Endothelial cell of umbilical vein (primary cell): ENCODE measurements at regions of chr4 and their contacts with region 1.

Region 1: DNA sequence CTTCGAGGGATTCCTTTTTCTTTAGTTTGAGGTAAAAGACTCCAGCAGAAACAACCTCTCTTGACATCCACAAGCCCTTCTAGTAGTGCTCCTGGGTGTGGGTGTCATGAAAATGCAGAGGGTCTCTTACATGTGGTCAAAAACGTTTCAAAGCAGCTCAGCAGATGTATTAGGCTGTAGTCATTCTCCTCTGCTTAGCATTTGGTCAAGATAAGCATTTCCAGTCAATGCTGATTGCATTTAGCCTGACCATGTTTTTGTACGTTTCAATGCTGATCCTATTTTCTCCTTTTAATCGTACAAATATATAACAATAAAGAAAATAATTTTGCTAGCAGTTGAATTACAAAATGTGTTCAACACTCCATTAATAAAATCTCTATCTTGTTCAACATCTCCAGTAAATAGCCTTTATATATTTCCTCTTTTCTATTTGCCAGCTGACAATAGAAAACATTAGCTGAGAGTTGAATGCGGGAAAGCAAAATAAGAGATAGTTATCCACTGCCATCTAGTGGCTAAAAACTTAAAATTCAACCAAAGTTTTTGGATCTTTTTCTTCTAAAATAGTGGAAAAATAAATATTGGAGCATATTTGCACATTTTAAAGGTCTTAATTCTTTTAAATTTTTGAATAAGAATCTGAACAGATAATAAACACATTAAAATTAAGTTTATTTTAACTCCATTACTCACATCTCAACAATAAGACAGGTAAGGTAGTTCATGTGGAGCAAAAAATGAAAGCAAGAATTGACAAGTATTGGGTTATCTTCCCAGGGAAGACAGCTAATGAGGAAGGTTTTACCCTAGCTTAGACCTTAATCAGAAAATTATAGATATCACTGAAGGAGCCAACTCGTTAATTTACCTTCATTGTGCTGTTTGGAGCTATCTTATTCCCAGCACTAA is 15.2 kb upstream of the PACRGL start:
- DNase-seq: peak; percentile 40
- H3K4me3 ChIP-seq: no peak overlapping the region
- H3K27ac ChIP-seq: no peak overlapping the region
- H3K4me1 ChIP-seq: no peaks in the 10 kb centered on the region
- H3K27me3 ChIP-seq: peaks cover 4 to 11% of the 10 kb centered on the region in 2 experiments
- CTCF ChIP-seq: peak; percentile 20 to 22
- POLR2A ChIP-seq: no peak

Region 2: DNA sequence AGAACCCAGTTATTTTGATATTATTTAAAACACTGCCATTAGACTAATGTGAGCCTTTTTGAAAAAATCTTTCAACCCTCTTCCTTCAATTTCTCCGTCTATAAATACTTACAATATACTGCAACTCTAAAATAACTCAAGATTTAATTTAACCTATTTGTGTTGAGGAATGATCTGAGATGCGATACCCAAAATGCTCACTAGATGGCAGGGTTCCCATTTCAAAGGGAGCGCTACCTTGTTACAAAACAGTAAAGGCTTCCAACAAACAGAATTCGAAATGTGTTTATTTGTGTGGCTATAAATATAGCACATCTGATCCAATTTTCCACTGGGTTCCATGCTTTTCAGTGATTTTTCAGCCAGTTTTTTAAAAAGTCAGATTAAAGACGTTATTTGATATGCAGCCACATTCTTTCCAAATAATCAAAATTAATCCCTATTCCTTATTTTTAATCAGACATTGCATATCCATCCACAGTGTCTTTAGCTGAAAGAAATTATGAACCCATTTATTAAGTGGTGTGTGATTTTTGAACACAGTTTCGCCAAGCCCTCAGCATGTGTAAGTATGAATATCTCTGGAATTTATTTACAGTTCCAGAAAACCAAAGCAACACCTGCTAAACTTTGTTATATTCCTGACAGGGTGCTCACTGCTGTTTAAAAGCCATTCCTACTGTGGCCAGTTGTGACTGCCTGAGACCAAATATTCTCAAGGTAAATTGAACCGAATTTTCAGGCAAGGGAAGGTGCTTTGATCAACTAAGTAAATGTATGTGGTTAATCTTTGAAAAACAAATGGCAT is 1995.6 kb before region 1 on chr4:
- CTCF ChIA-PET with region 1: interaction called, 4 read pairs
- POLR2A ChIA-PET with region 1: no interaction called
- dilution Hi-C with region 1: no loop called
- intact Hi-C with region 1: loop called (anchors 1 kb)
- DNase-seq: peak; percentile 77
- H3K4me3 ChIP-seq: no peak overlapping the region
- H3K27ac ChIP-seq: no peak overlapping the region
- H3K4me1 ChIP-seq: peaks cover 2% of the 10 kb centered on the region
- H3K27me3 ChIP-seq: no peaks in the 10 kb centered on the region
- CTCF ChIP-seq: peak; percentile 57 to 68
- POLR2A ChIP-seq: no peak

Region 3: GRCh38 chr4:20305976-20306375 is 379.1 kb before region 1 on chr4:
- CTCF ChIA-PET with region 1: interaction called, 12 read pairs
- POLR2A ChIA-PET with region 1: no interaction called
- dilution Hi-C with region 1: no loop called
- intact Hi-C with region 1: no loop called
- DNase-seq: no peak
- H3K4me3 ChIP-seq: no peak overlapping the region
- H3K27ac ChIP-seq: no peak overlapping the region
- H3K4me1 ChIP-seq: no peaks in the 10 kb centered on the region
- H3K27me3 ChIP-seq: no peaks in the 10 kb centered on the region
- CTCF ChIP-seq: peak in 1 of 2 donors; percentile 12
- POLR2A ChIP-seq: no peak

Region 4: DNA sequence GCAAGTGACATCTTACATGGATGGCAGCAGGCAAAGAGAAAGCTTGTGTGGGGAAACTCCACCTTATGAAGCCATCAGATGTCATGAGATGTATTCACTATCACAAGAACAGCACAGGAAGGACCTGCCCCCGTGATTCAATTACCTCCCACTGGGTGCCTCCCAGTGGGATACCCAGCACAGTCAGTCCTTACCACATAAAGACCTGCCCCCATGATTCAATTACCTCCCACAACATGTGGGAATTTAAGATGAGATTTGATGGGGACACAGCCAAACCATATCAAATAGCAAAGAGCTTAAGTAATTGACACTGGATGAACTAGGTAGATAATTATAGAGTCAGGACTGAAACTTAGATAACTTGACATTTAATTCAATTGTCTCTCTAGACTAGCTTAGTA is 347.8 kb before region 1 on chr4:
- CTCF ChIA-PET with region 1: no interaction called
- POLR2A ChIA-PET with region 1: no interaction called
- dilution Hi-C with region 1: no loop called
- intact Hi-C with region 1: no loop called
- DNase-seq: no peak
- H3K4me3 ChIP-seq: no peak overlapping the region
- H3K27ac ChIP-seq: no peak overlapping the region
- H3K4me1 ChIP-seq: no peaks in the 10 kb centered on the region
- H3K27me3 ChIP-seq: no peaks in the 10 kb centered on the region
- CTCF ChIP-seq: no peak
- POLR2A ChIP-seq: no peak

Region 5: GRCh38 chr4:20422398-20422797 is 262.7 kb before region 1 on chr4:
- CTCF ChIA-PET with region 1: interaction called, 50 read pairs
- POLR2A ChIA-PET with region 1: no interaction called
- dilution Hi-C with region 1: loop called (anchors 25 kb)
- intact Hi-C with region 1: loop called (anchors 1 kb)
- DNase-seq: peak; percentile 78
- H3K4me3 ChIP-seq: no peak overlapping the region
- H3K27ac ChIP-seq: no peak overlapping the region
- H3K4me1 ChIP-seq: peaks cover 9% of the 10 kb centered on the region
- H3K27me3 ChIP-seq: no peaks in the 10 kb centered on the region
- CTCF ChIP-seq: peak; percentile 51 to 63
- POLR2A ChIP-seq: no peak

Region 6: GRCh38 chr4:20464381-20464780 is 220.7 kb before region 1 on chr4:
- CTCF ChIA-PET with region 1: no interaction called
- POLR2A ChIA-PET with region 1: no interaction called
- dilution Hi-C with region 1: no loop called
- intact Hi-C with region 1: no loop called
- DNase-seq: peak; percentile 23
- H3K4me3 ChIP-seq: no peak overlapping the region
- H3K27ac ChIP-seq: no peak overlapping the region
- H3K4me1 ChIP-seq: no peaks in the 10 kb centered on the region
- H3K27me3 ChIP-seq: no peaks in the 10 kb centered on the region
- CTCF ChIP-seq: no peak
- POLR2A ChIP-seq: no peak

Region 7: GRCh38 chr4:20544645-20545044 is 140.5 kb before region 1 on chr4:
- CTCF ChIA-PET with region 1: interaction called, 27 read pairs
- POLR2A ChIA-PET with region 1: interaction called, 3 read pairs
- dilution Hi-C with region 1: no loop called
- intact Hi-C with region 1: loop called (anchors 1 kb)
- DNase-seq: peak; percentile 74
- H3K4me3 ChIP-seq: no peak overlapping the region
- H3K27ac ChIP-seq: no peak overlapping the region
- H3K4me1 ChIP-seq: no peaks in the 10 kb centered on the region
- H3K27me3 ChIP-seq: no peaks in the 10 kb centered on the region
- CTCF ChIP-seq: peak; percentile 23 to 38
- POLR2A ChIP-seq: no peak